A673 (cell line): ENCODE measurements at regions of chr5 and their contacts with region 1.

Region 1: DNA sequence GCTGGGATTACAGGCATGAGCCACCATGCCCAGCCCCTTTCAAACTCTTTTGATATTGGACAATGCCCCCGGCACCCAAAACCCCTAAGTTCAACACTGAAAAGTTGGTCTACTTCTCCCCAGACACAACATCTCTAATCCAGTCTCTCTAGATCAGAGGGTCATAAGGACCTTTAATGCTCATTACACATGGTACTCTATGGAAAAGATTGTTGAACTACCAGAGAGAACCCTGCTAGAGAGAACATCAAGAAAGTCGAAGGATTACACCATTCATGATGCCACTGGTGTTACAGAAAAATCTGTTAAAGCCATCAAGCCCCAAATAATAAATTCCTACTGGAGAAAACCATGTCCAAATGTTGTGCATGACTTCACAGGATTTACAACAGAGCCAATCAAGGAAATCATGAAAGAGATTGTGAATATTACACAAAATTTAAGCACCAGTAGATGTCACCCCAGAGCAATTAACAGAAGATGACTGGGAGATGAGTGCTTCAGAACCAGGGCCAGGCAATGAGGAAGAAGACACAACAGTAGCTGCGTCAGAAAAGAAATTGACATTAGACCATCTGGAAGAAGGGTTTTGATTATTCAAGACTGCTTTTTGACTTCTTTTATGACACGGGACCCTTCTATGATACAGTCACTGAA is 28.3 kb upstream of the NIPAL4 start:
- DNase-seq: peak; percentile 63
- H3K4me3 ChIP-seq: no peak overlapping the region
- H3K27ac ChIP-seq: no peak overlapping the region
- H3K4me1 ChIP-seq: no peaks in the 10 kb centered on the region
- H3K27me3 ChIP-seq: no peaks in the 10 kb centered on the region
- CTCF ChIP-seq: peak; percentile 49

Region 2: GRCh38 chr5:157471709-157472108 is 40.0 kb after region 1 on chr5:
- CTCF ChIA-PET with region 1: interaction called, 5 read pairs
- POLR2A ChIA-PET with region 1: no interaction called
- intact Hi-C with region 1: loop called (anchors 2 kb)
- DNase-seq: peak; percentile 31
- H3K4me3 ChIP-seq: no peak overlapping the region
- H3K27ac ChIP-seq: no peak overlapping the region
- H3K4me1 ChIP-seq: no peaks in the 10 kb centered on the region
- H3K27me3 ChIP-seq: no peaks in the 10 kb centered on the region
- CTCF ChIP-seq: peak; percentile 67